ENCODE measurements at regions of chr13 and their contacts with region 1.

Region 1: GRCh38 chr13:41652727-41653361 is 195.5 kb downstream of the RGCC start:
- DNase-seq: peak in 7 of 9 experiments; percentile 24 to 67 (median 43)
- ATAC-seq: peak; percentile 56
- H3K4me3 ChIP-seq: no peak overlapping the region
- H3K4me3 Mint-ChIP-seq: no peak overlapping the region
- H3K27ac ChIP-seq: no peak overlapping the region
- H3K27ac Mint-ChIP-seq: no peak overlapping the region
- H3K4me1 ChIP-seq: no peaks in the 10 kb centered on the region
- H3K4me1 Mint-ChIP-seq: peaks cover 11% of the 10 kb centered on the region
- H3K27me3 ChIP-seq: no peaks in the 10 kb centered on the region
- H3K27me3 Mint-ChIP-seq: no peaks in the 10 kb centered on the region
- CTCF ChIP-seq: peak; percentile 64

Region 2: DNA sequence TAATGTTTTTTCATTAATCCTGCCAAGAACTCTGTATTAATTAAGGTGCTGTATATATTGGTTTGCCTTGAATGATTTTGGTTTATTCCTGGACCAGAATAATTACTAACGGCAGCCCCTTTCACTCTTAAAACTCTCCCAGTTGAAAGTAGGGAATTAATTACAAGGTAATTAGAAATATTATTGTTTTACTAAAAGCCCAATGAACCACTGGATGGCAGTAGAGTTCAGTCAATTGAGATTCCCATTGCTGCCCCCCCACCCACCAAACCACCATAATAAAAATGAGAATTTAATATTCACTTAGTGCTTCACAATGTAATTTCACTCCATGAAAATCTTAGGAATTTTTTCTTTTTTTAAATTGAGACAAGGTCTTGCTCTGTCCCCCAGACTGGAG is 577.8 kb before region 1 on chr13:
- CTCF ChIA-PET with region 1: interaction called, 4 read pairs
- POLR2A ChIA-PET with region 1: no interaction called
- intact Hi-C with region 1: loop called in 1 of 2 experiments (anchors 5 kb)
- DNase-seq: peak in 5 of 9 experiments; percentile 23 to 70 (median 49)
- ATAC-seq: peak; percentile 63
- H3K4me3 ChIP-seq: no peak overlapping the region
- H3K4me3 Mint-ChIP-seq: no peak overlapping the region
- H3K27ac ChIP-seq: no peak overlapping the region
- H3K27ac Mint-ChIP-seq: no peak overlapping the region
- H3K4me1 ChIP-seq: no peaks in the 10 kb centered on the region
- H3K4me1 Mint-ChIP-seq: no peaks in the 10 kb centered on the region
- H3K27me3 ChIP-seq: no peaks in the 10 kb centered on the region
- H3K27me3 Mint-ChIP-seq: no peaks in the 10 kb centered on the region
- CTCF ChIP-seq: peak; percentile 72

Region 3: DNA sequence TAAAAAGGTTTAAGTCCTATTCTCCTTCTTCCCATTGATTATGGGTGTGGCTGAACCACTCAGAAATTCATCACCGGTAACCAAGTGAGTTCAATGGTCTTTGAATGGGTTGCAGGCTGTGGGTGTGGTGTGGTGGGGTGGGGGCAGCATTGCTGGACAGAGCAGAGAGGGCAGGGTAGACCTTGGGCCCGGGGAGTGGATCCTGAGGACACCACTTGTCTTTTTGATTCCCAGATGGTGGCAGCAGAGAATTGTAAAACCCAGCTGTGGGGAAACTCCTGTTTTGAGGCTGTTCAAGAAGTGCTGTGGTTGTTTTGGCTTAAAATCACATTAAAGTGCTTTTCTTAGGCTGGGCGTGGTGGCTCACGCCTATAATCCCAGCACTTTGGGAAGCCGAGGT is 241.3 kb before region 1 on chr13:
- CTCF ChIA-PET with region 1: interaction called, 15 read pairs
- POLR2A ChIA-PET with region 1: no interaction called
- intact Hi-C with region 1: loop called in 1 of 2 experiments (anchors 1 kb)
- DNase-seq: peak in 4 of 9 experiments; percentile 17 to 66 (median 38)
- ATAC-seq: no peak
- H3K4me3 ChIP-seq: no peak overlapping the region
- H3K4me3 Mint-ChIP-seq: no peak overlapping the region
- H3K27ac ChIP-seq: no peak overlapping the region
- H3K27ac Mint-ChIP-seq: no peak overlapping the region
- H3K4me1 ChIP-seq: no peaks in the 10 kb centered on the region
- H3K4me1 Mint-ChIP-seq: peaks cover 3% of the 10 kb centered on the region
- H3K27me3 ChIP-seq: no peaks in the 10 kb centered on the region
- H3K27me3 Mint-ChIP-seq: no peaks in the 10 kb centered on the region
- CTCF ChIP-seq: no peak

Region 4: DNA sequence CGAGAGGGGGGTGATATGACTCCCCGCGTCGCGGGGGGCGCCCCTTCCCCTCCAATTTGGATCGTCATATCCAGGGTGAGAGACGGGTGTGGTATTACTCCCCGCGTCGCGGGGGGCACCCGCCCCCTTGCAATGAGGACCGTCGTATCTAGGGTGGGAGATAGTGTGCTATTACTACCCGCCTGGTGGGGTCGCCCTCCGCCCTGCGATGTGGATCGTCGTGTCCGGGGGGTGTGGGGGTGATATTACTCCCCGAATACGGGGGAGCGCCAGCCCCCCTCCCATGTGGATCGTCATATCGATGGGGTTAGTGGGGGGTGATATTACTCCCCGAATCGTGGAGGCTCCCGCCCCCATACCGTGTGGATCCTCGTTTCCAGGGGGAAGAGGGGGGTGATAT is 224.7 kb before region 1 on chr13:
- CTCF ChIA-PET with region 1: interaction called, 8 read pairs
- POLR2A ChIA-PET with region 1: no interaction called
- intact Hi-C with region 1: loop called (anchors 1 kb)
- DNase-seq: peak; percentile 10 to 75 (median 59)
- ATAC-seq: peak; percentile 96
- H3K4me3 ChIP-seq: peak overlapping the region in 1 of 2 experiments; percentile 26
- H3K4me3 Mint-ChIP-seq: peak overlapping the region; percentile 68
- H3K27ac ChIP-seq: no peak overlapping the region
- H3K27ac Mint-ChIP-seq: no peak overlapping the region
- H3K4me1 ChIP-seq: no peaks in the 10 kb centered on the region
- H3K4me1 Mint-ChIP-seq: peaks cover 10% of the 10 kb centered on the region
- H3K27me3 ChIP-seq: no peaks in the 10 kb centered on the region
- H3K27me3 Mint-ChIP-seq: peaks cover 4% of the 10 kb centered on the region
- CTCF ChIP-seq: peak; percentile 54

Region 5: GRCh38 chr13:41708713-41709112 is 55.9 kb after region 1 on chr13:
- CTCF ChIA-PET with region 1: no interaction called
- POLR2A ChIA-PET with region 1: no interaction called
- intact Hi-C with region 1: no loop called
- DNase-seq: no peak
- ATAC-seq: no peak
- H3K4me3 ChIP-seq: no peak overlapping the region
- H3K4me3 Mint-ChIP-seq: no peak overlapping the region
- H3K27ac ChIP-seq: no peak overlapping the region
- H3K27ac Mint-ChIP-seq: no peak overlapping the region
- H3K4me1 ChIP-seq: no peaks in the 10 kb centered on the region
- H3K4me1 Mint-ChIP-seq: no peaks in the 10 kb centered on the region
- H3K27me3 ChIP-seq: no peaks in the 10 kb centered on the region
- H3K27me3 Mint-ChIP-seq: no peaks in the 10 kb centered on the region
- CTCF ChIP-seq: no peak